CD8-positive, alpha-beta memory T cell (primary cell): ENCODE measurements at regions of chr16 and their contacts with region 1.

Region 1: GRCh38 chr16:75464130-75464918 is at the start of gene TMEM170A:
- DNase-seq: peak; percentile 98 to 99 (median 99)
- H3K4me3 ChIP-seq: peak within 1 kb of the TSS; percentile 91
- H3K4me3 Mint-ChIP-seq: peak within 1 kb of the TSS; percentile 88 to 98 (median 92)
- H3K27ac ChIP-seq: peak within 1 kb of the TSS; percentile 96
- H3K27ac Mint-ChIP-seq: peak within 1 kb of the TSS; percentile 93 to 99 (median 94)
- H3K4me1 ChIP-seq: peaks cover 30% of the 10 kb centered on the region
- H3K4me1 Mint-ChIP-seq: peaks cover 44 to 49% (median 48%) of the 10 kb centered on the region in 3 donors
- H3K27me3 ChIP-seq: no peaks in the 10 kb centered on the region
- H3K27me3 Mint-ChIP-seq: peaks cover 0 to 4% of the 10 kb centered on the region in 2 donors
- total RNA-seq, gene TMEM170A: 40.9 to 41.8 TPM

Region 2: GRCh38 chr16:75432828-75433731 is 31.2 kb before region 1 on chr16 and contains the start of gene CFDP1:
- CTCF ChIA-PET with region 1: interaction called, 37 read pairs
- POLR2A ChIA-PET with region 1: interaction called, 21 read pairs
- DNase-seq: peak; percentile 94 to 98 (median 96)
- H3K4me3 ChIP-seq: peak within 1 kb of the TSS; percentile 93
- H3K4me3 Mint-ChIP-seq: peak within 1 kb of the TSS; percentile 86 to 95 (median 93)
- H3K27ac ChIP-seq: peak within 1 kb of the TSS; percentile 98
- H3K27ac Mint-ChIP-seq: peak within 1 kb of the TSS; percentile 94 to 99 (median 97)
- H3K4me1 ChIP-seq: peaks cover 12% of the 10 kb centered on the region
- H3K4me1 Mint-ChIP-seq: peaks cover 25 to 46% (median 39%) of the 10 kb centered on the region in 3 donors
- H3K27me3 ChIP-seq: no peaks in the 10 kb centered on the region
- H3K27me3 Mint-ChIP-seq: peaks cover 0 to 2% of the 10 kb centered on the region in 2 donors
- total RNA-seq, gene CFDP1: 34.2 to 39.1 TPM